ENCODE measurements at regions of chr1 and their contacts with region 1.

Region 1: DNA sequence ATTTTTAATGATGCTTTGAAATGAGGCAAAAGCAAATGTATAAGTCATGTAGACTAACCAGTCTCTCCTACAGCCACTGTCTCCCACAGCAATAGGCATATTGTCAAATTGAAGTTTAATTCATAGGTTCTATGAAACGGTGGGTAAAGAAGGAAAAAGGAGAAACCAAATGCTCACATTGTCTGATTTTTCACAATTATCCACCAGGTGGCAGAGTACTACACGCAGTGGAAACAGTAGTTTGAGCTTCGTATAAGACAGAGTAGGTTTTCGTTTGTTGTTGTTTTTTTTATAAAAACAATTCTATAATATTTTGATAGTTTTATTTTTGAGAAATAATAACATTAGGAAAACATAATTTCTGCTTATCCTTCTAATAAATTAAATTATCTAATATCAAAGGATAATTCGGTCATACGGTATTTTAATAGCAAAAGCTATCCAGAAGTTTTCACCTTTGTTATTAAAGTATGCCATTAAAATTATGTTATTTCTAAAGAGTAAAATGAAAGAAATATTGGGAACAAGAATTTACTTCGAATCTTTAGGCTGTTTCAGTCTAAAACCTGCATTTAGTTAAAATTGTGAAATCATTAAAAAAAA is 39.1 kb downstream of the TYW3 start:
- DNase-seq: no peak
- ATAC-seq: no peak

Region 2: DNA sequence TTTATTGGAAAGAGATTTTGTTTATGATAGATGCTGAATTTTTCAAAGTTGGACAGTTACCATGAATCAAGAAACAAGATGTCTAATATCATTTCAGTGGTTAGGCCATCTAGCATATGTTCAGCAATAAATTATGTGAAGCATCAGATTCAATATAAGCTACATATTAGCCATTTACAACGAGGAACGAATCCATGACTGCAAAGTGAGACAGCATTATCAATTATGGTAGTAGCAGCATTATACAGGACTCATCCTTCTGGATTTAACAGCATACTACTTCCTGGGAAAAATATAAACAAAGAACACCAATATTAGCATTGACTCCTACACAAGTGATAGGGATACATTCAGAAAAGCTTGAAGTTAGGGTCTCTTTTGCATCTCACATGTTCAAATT is 318.7 kb before region 1 on chr1:
- intact Hi-C with region 1: no loop called
- DNase-seq: no peak
- ATAC-seq: no peak

Region 3: DNA sequence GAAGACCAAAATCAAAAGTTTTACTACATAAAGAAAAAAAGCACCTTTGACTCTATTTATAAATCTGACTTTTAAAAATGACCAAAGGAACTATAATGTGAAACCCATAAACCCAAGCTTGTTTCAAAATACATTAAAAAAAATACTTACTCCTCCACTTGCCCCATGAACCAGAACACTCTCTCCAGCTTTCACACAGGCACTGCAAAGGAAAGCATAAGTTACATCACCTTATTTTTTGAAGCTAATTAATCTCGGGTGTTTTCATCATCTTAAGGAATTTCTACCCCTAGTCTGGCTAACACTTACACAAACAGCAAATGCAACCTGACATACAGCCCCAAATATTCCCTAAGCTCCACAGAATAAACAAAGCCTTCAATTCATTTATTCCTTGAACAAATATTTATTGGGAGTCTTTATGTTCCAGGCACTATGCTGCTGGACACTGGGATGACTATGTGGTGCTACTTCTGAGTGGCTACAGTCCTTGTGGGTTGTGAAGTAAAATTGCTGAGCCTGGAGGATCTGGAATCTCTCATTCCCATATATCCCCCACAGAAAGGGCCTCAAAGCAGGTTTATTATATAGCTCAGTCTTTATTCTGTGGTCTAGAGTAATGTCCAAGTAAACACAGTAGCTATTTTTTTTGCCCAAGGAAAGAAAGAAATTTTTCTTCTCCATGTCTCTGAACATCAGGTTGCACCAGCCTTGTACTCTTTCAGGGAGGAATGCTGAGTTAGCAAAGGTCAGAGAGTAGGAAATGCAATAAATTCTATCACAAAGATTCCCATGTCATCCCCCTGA is 57.4 kb before region 1 on chr1:
- intact Hi-C with region 1: no loop called
- DNase-seq: no peak
- ATAC-seq: no peak

Region 4: GRCh38 chr1:74790453-74790852 is 18.4 kb after region 1 on chr1:
- intact Hi-C with region 1: no loop called
- DNase-seq: no peak
- ATAC-seq: no peak

Region 5: DNA sequence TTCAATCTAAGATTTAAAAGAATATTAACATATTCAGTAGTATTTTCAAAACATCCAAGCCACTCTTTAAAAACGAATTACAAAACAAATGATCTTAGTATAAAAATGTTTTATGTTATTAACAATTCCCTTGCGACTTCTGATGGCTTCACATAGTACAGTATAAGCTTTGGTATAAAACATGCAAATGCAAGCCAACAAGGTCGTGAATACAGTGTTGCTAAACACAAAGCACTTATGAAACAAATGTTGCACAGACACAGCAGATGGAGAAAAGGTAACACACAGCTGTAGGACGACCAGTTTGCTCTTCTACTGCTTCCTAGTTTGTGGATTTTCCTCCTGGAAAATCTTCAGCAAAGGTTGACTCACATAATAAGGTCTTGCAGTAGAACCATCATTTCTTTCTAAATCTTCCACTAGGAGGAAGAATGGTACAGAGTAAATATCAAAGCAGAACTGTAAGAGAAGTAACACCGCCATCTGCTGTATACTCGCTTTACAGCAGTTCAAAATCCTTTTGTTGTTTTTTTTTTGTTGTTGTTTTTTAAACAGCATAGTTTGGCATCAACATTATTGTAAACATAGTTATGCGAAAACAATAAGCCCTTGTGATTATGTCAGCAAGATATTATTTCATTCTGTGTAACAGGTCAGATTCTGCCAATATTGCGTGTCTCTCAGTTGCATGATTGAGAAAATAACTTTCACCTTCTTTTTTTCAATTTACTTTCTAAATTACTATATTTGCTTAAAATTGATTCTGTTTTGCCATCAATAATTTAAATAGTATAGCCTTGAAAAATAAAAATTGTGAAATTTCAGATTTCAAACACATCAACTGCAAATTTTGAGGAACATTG is 431.6 kb after region 1 on chr1:
- intact Hi-C with region 1: loop called (anchors 2 kb)
- DNase-seq: no peak
- ATAC-seq: peak; percentile 54

Measured in Right ventricle myocardium inferior (tissue), 1 donor.